ENCODE measurements at regions of chr7 and their contacts with region 1.

Region 1: GRCh38 chr7:89622838-89623672 is 531.2 kb upstream of the STEAP1 start:
- DNase-seq: peak; percentile 39
- ATAC-seq: peak; percentile 87
- H3K4me3 Mint-ChIP-seq: no peak overlapping the region
- H3K27ac Mint-ChIP-seq: no peak overlapping the region
- H3K4me1 Mint-ChIP-seq: peaks cover 26% of the 10 kb centered on the region
- H3K27me3 Mint-ChIP-seq: no peaks in the 10 kb centered on the region

Region 2: GRCh38 chr7:88546808-88547207 is 1076.2 kb before region 1 on chr7:
- CTCF ChIA-PET with region 1: no interaction called
- POLR2A ChIA-PET with region 1: no interaction called
- intact Hi-C with region 1: loop called in 1 of 2 experiments (anchors 1 kb)
- DNase-seq: peak; percentile 45
- ATAC-seq: no peak
- H3K4me3 Mint-ChIP-seq: no peak overlapping the region
- H3K27ac Mint-ChIP-seq: no peak overlapping the region
- H3K4me1 Mint-ChIP-seq: no peaks in the 10 kb centered on the region
- H3K27me3 Mint-ChIP-seq: no peaks in the 10 kb centered on the region

Region 3: GRCh38 chr7:88789480-88790064 is 833.5 kb before region 1 on chr7:
- CTCF ChIA-PET with region 1: no interaction called
- POLR2A ChIA-PET with region 1: no interaction called
- intact Hi-C with region 1: loop called (anchors 1 to 5 kb)
- DNase-seq: no peak
- ATAC-seq: no peak
- H3K4me3 Mint-ChIP-seq: no peak overlapping the region
- H3K27ac Mint-ChIP-seq: no peak overlapping the region
- H3K4me1 Mint-ChIP-seq: no peaks in the 10 kb centered on the region
- H3K27me3 Mint-ChIP-seq: no peaks in the 10 kb centered on the region

Region 4: GRCh38 chr7:88967432-88967831 is 655.6 kb before region 1 on chr7:
- CTCF ChIA-PET with region 1: interaction called, 3 read pairs
- POLR2A ChIA-PET with region 1: no interaction called
- intact Hi-C with region 1: loop called in 1 of 2 experiments (anchors 2 kb)
- DNase-seq: no peak
- ATAC-seq: no peak
- H3K4me3 Mint-ChIP-seq: no peak overlapping the region
- H3K27ac Mint-ChIP-seq: no peak overlapping the region
- H3K4me1 Mint-ChIP-seq: no peaks in the 10 kb centered on the region
- H3K27me3 Mint-ChIP-seq: no peaks in the 10 kb centered on the region